Transverse colon (tissue), 4 donors: ENCODE measurements at regions of chr5 and their contacts with region 1.

Region 1: GRCh38 chr5:168291464-168291961 is at the start of gene WWC1:
- DNase-seq: peak; percentile 91
- H3K4me3 ChIP-seq: peak within 1 kb of the TSS; percentile 26 to 70 (median 58)
- H3K27ac ChIP-seq: peak within 1 kb of the TSS; percentile 58 to 79 (median 68)
- H3K4me1 ChIP-seq: peaks cover 3 to 24% (median 14%) of the 10 kb centered on the region in 4 donors
- H3K27me3 ChIP-seq: peaks cover 31% of the 10 kb centered on the region
- CTCF ChIP-seq: peak in 4 of 5 experiments; percentile 24 to 60 (median 38)
- EP300 ChIP-seq: no peak
- POLR2A ChIP-seq: peak; percentile 63
- total RNA-seq, gene WWC1: 10.1 to 34.8 (median 16.8) TPM

Region 2: DNA sequence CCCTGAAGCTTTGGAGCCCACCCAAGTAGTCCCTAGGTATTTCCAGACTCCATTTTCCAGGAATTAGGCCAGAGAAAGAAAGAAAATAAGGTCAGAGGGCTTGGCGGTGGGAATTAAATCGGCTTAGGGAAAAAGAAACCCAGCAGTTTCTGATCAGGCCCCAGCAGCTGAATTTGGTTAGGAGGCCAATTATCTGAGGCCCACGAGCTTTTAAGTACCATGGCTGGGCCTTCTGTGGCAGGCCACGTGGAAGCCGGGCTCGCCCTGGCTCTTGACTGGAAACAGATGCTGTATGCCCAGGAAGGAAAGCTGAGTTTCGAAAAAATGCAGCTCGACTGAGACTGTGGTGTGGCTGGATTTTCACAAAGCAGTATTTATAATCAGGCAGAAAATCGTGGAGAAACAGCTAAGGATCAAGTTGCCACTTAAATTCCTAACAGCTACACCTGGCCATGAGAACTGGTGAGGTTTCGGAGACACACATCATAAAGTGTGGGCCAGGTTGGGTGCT is 362.8 kb after region 1 on chr5:
- in situ Hi-C with region 1: loop called in 1 of 4 experiments (anchors 25 kb)
- intact Hi-C with region 1: no loop called
- DNase-seq: no peak
- H3K4me3 ChIP-seq: no peak overlapping the region
- H3K27ac ChIP-seq: peak overlapping the region; percentile 79 to 85 (median 82)
- H3K4me1 ChIP-seq: peaks cover 10 to 64% (median 38%) of the 10 kb centered on the region in 4 donors
- H3K27me3 ChIP-seq: no peaks in the 10 kb centered on the region
- CTCF ChIP-seq: no peak
- EP300 ChIP-seq: no peak
- POLR2A ChIP-seq: no peak